ENCODE measurements at regions of chr1 and their contacts with region 1.

Region 1: DNA sequence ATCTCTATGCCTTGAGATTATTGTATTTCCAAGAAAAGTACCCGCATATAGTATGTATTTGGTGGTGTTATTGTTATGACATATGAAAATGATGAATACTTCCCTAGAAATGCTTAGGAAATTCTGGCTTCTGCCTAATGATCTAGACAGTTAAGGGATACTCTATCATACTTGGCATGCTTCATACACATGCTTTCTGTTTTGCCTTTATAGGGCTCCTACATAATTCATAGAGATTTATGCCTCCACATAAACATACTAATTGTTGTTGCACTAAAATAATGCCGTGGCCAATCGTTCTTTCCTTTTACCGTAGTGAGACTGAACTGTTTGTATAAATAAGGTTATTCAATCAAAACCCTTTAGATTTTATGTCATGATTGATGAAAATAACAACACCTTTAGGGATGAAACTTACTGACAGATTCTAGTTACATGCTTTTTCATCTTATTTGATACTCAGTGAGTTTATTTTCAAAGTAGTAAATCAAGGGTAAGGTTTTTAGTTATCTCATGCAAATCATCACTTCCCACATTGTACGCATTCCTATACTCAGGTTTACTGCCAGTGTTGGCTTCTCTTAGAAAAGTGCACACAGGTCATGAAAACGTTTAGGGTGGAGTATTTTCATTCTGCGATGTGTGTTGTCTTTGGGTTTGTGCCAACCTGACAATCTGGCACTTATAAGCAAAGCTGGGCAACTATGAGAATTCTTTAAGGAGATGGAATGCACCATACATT is 40.5 kb upstream of the SCYL3 start:
- DNase-seq: no peak

Region 2: DNA sequence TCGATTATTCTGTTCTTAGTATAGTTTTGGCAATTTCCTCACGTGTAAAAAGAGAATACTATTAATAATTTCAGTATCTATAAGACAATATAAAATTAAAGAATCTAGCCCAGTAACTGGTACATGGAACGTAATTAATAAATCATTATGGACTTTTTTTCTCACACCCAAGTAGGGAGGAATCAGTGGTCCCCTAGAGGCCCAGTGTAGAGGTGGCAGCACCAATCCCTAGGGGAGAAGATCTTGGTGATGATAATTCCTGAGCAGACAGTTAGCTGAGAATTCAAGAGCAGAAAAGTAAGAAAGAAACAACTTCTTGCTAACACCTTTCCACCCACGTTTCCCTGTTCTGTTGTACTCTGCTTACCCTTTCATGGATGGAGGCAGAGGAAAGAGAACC is 180.6 kb before region 1 on chr1:
- intact Hi-C with region 1: no loop called
- DNase-seq: no peak

Region 3: GRCh38 chr1:169890761-169891538 is 43.2 kb before region 1 on chr1:
- intact Hi-C with region 1: no loop called
- DNase-seq: no peak

Region 4: GRCh38 chr1:169999331-169999741 is 65.2 kb after region 1 on chr1:
- intact Hi-C with region 1: no loop called
- DNase-seq: no peak

Region 5: DNA sequence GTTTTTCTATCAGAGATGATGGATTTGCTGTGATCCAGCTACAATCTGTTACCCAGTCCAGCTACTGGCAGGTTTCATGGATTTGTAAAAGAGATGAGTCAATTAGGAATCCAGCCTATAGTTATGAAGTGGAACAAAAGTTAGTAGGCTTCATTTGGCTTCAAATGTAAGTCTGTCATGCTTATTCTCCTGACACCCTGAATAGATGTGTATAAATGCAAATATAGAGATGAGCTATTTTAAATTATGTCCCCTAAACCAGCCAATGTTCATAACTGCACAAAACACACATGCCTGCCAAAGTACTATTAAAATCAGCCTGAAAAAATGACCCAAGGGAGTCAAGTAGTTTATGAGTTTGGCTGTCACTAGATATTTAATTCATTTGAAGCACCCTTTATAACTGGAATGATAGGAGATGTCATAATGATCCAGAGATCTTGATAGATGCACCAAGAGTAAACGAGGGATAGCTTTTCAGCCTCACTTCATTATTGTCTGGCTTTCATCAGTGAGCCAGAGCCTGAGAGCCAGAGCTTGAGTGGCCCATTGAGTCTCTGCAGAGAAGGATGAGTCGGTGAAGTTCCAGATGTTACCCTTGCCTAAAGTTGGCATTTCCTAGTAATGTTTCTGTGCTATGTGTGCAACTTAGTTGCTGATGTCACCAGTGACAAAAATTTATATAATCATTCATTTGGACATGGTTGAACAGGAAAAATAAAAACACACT is 199.8 kb after region 1 on chr1:
- intact Hi-C with region 1: loop called (anchors 10 kb)
- DNase-seq: no peak

Region 6: GRCh38 chr1:170881268-170882265 is 947.4 kb after region 1 on chr1:
- intact Hi-C with region 1: loop called (anchors 5 kb)
- DNase-seq: no peak

Region 7: GRCh38 chr1:170929835-170930554 is 995.8 kb after region 1 on chr1:
- intact Hi-C with region 1: loop called (anchors 5 kb)
- DNase-seq: no peak

Region 8: GRCh38 chr1:171468120-171469035 is 1534.2 kb after region 1 on chr1:
- intact Hi-C with region 1: no loop called
- DNase-seq: no peak

Measured in cardiac septum (tissue), 1 donor.